ENCODE measurements at regions of chr17 and their contacts with region 1.

Region 1: DNA sequence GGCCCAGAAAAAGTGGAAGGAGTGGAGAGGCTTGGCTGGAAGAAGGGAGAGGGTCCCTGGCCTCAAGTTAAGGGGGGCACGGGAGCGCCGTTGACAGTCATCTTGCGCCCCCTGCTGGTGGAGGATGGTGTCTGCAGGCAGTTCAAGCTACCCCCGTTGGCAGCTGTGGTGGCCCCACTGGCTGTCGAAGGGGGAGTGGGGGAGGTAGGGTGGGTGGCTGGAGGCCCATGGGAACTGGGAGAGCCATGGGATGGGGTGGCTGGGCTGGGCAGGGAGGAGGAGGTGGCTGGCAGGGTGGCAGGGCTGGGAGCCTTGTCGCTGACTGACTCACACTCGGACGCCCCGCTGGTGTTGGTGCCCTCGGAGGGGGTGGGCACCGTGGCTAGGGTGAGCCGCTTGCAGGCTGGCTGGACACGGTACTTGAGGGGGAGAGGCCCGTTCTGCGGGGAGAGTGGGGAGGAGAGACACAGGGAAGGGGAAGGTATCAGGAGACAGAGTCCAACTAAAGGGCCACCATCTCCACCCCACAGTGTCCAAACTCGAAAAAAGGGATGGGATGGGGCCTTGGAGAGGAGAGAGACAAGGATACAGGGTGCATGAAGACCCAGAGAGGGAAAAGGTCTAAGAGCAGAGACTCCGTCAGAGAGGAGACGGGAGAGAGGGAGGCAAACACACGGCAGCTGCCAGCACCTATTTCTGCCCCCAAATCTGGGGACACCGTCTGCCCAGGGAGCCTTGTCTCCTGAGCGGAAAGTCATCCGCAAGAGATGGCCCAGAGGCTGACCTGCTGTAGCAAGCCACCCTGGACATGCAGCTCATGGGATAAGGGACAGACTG is 5.2 kb downstream of the CISD3 start:
- DNase-seq: peak in 1 of 2 donors; percentile 92
- H3K4me3 ChIP-seq: no peak overlapping the region
- CTCF ChIP-seq: no peak
- POLR2A ChIP-seq: no peak

Region 2: GRCh38 chr17:38681096-38681495 is 54.3 kb before region 1 on chr17:
- intact Hi-C with region 1: loop called (anchors 2 kb)
- DNase-seq: no peak
- H3K4me3 ChIP-seq: no peak overlapping the region
- CTCF ChIP-seq: no peak
- POLR2A ChIP-seq: no peak